Body of pancreas (tissue), 4 donors: ENCODE measurements at regions of chr1 and their contacts with region 1.

Region 1: GRCh38 chr1:44002606-44003157 is 11.3 kb downstream of the CCDC24 start:
- DNase-seq: no peak
- ATAC-seq: no peak
- H3K4me3 ChIP-seq: no peak overlapping the region
- H3K27ac ChIP-seq: no peak overlapping the region
- H3K4me1 ChIP-seq: peaks cover 4% of the 10 kb centered on the region
- H3K27me3 ChIP-seq: no peaks in the 10 kb centered on the region
- CTCF ChIP-seq: no peak
- POLR2A ChIP-seq: no peak

Region 2: DNA sequence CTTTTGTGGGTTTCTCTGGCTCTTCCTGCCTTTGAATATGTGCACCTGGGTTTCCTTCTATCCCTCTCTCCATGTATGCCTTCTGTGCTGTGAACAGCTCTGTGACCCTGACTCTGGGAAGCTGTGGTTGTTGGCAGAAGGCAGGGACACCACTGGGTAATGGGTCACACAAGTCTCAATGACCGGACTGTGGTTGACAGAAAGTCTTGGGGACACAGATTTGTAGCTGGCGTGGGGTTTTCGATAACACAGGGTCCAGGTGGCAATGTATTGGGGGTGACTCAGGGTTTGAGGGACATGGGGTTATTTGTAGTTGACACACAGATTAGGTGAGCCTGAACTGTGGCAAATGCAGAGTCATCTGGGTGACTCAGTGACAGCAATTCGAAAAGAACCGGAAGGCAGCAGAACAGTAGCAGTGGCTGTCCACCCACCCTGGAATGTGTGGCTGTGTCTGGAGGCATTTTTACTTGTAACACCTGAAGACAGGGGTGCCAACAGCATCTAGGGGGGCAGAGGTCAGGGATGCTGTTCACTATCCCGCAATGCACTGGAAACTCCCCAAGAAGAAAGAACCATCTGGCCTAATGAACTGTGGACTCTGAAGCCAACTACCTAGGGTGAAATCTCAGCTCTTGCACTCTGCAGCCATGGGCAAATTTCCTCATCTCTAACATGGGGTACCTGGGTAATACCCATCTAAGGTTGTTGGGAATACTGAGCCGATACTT is 41.6 kb after region 1 on chr1:
- intact Hi-C with region 1: loop called (anchors 5 kb)
- DNase-seq: no peak
- ATAC-seq: no peak
- H3K4me3 ChIP-seq: no peak overlapping the region
- H3K27ac ChIP-seq: no peak overlapping the region
- H3K4me1 ChIP-seq: peaks cover 7% of the 10 kb centered on the region
- H3K27me3 ChIP-seq: no peaks in the 10 kb centered on the region
- CTCF ChIP-seq: no peak
- POLR2A ChIP-seq: no peak

Region 3: GRCh38 chr1:44318097-44319088 is 315.7 kb after region 1 on chr1:
- intact Hi-C with region 1: no loop called
- DNase-seq: peak; percentile 46 to 53 (median 50)
- ATAC-seq: peak; percentile 20
- H3K4me3 ChIP-seq: no peak overlapping the region
- H3K27ac ChIP-seq: no peak overlapping the region
- H3K4me1 ChIP-seq: peaks cover 7% of the 10 kb centered on the region
- H3K27me3 ChIP-seq: no peaks in the 10 kb centered on the region
- CTCF ChIP-seq: peak; percentile 71 to 94 (median 75)
- POLR2A ChIP-seq: no peak